Heart right ventricle (tissue), 16 donors: ENCODE measurements at regions of chr14 and their contacts with region 1.

Region 1: DNA sequence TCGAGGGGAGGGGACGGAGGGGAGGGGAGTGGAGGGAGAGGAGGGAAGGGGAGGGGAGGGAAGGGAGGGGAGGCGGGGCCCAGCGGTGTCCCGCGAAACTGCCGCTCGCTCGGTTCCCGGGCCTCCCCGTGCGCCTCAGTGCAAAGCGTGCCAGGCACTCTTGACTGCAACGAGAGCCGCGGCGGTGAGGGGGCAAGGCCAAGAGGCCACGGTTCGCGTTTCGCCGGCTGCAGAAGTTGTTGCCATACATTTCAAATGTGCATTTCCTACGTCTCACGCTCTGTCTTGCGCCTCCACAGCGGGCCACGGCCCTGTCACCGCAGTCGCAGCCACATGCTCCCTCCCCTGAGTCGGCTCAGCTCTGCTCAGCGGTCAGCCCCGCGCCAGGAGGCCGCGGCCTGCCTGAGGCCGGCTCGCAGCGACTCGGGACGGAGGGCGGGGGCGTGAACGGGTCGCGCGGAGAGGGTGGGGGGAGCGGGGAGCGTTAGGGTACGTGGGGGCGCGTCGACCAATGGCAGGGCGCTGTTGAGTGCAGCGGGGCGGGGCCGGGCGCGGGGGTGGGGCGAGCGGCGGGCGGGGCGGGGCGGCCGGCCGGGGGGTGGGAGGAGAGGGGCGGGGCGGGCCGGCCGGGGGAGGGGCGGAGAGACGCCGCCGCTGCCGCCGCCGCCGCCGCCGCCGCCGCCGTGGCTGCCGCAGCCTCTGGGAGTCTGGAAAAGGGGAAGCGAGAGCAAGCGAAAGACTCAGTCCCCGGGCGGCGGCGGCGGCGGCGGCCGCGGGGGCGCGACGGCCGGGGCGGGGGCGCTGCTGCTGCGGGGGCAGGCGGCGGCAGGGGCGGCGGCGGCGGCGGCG is at the start of gene PPP2R5C:
- DNase-seq: peak; percentile 94
- ATAC-seq: peak; percentile 86 to 94 (median 90)
- H3K4me3 ChIP-seq: peak within 1 kb of the TSS; percentile 89 to 100 (median 98)
- H3K27ac ChIP-seq: peak within 1 kb of the TSS; percentile 72 to 98 (median 95)
- H3K4me1 ChIP-seq: peaks cover 0 to 25% (median 11%) of the 10 kb centered on the region in 9 donors
- H3K27me3 ChIP-seq: no peaks in the 10 kb centered on the region
- CTCF ChIP-seq: no peak
- total RNA-seq, gene PPP2R5C: 183 to 257 (median 224) TPM

Region 2: DNA sequence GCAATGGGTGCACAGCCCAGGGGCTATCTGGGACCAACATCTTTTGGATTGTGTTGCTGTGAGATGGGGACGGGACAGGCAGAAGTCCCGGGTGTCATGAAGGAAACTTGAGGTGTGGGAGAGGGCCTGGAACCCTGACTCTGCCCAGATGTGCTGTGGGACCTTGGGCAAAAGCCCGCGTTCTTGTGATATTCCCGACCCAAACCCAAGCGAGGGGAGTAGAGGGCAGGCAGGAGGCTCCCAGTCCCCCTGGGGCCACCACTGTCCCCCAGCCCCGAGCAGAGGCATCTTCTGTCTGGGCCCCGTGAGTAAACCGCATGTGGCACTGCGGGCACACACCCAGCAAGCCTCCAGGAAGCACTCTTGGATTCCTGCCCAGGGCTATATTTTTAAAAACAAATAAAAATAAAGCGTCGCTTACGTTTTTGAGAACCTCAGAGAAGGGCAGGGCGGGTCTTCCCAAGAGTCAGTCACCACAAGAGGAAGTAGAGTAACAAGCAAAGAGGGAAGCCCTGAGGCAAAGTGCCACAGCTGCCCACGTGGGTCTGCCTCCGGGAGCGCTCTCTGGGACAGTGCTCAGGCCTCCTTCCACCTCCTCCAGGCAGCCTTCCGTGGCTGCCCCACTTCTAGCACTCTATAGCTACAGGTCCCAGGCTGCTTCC is 1213.5 kb before region 1 on chr14:
- intact Hi-C with region 1: loop called in 1 of 10 experiments (anchors 10 kb)
- DNase-seq: peak; percentile 38 to 54
- ATAC-seq: peak in 7 of 8 donors; percentile 45 to 84 (median 63)
- H3K4me3 ChIP-seq: peak overlapping the region in 1 of 10 donors; percentile 18
- H3K27ac ChIP-seq: peak overlapping the region in 2 of 10 donors; percentile 21 to 60
- H3K4me1 ChIP-seq: peaks cover 0 to 24% (median 0%) of the 10 kb centered on the region in 9 donors
- H3K27me3 ChIP-seq: peaks cover 0 to 3% (median 0%) of the 10 kb centered on the region in 7 donors
- CTCF ChIP-seq: no peak

Region 3: GRCh38 chr14:101707068-101707842 is 54.0 kb before region 1 on chr14:
- intact Hi-C with region 1: loop called in 6 of 10 experiments (anchors 5 kb)
- DNase-seq: peak in 1 of 2 donors; percentile 79
- ATAC-seq: peak; percentile 38 to 83 (median 64)
- H3K4me3 ChIP-seq: peak overlapping the region in 2 of 10 donors; percentile 1 to 25
- H3K27ac ChIP-seq: peak overlapping the region in 9 of 10 donors; percentile 71 to 90 (median 84)
- H3K4me1 ChIP-seq: peaks cover 10 to 33% (median 25%) of the 10 kb centered on the region in 9 donors
- H3K27me3 ChIP-seq: peaks cover 0 to 29% (median 5%) of the 10 kb centered on the region in 7 donors
- CTCF ChIP-seq: peak; percentile 72 to 90 (median 84)

Region 4: GRCh38 chr14:101809671-101810514 is 48.6 kb after region 1 on chr14:
- intact Hi-C with region 1: loop called in 1 of 10 experiments (anchors 5 kb)
- DNase-seq: peak; percentile 71 to 92
- ATAC-seq: peak; percentile 93 to 97 (median 94)
- H3K4me3 ChIP-seq: peak overlapping the region; percentile 46 to 81 (median 62)
- H3K27ac ChIP-seq: peak overlapping the region; percentile 88 to 100 (median 95)
- H3K4me1 ChIP-seq: peaks cover 15 to 62% (median 56%) of the 10 kb centered on the region in 9 donors
- H3K27me3 ChIP-seq: no peaks in the 10 kb centered on the region
- CTCF ChIP-seq: no peak

Region 5: DNA sequence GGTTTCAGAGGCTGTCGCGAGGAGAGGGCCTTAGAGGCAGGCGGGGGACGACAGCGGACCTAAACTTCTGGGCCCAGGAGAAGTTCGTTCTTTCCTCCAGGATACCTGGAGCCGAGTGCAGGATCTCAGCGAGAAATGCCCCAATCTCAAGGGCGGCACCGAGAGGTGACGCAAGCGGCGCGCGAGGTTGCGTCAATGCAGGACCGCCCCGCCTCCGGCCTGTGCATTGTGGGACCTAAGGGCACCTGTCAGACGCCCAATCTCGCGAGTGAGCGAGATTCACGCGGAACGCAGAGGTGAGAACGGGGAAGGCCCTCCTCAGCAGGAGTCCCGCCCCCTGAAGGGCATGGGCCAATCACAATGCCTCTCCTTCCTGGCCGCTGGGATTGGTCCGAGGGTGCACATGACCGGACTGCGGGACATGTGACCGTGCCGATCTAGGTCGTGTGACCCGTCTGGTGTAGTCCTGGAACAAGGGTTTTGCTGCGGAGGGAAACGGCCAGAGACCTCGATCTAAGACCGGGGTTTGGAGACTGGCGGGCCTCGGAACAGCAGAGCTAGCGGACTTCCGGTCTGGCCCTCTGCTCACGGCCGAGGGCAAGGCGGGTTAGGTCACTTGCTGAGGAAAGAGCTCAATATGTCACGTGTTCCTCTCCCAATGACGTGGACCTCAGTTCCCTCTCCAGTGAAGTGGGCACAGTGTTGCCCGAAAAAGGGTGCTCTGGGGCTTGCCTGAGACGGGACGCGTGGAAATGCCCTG is 186.8 kb after region 1 on chr14:
- intact Hi-C with region 1: loop called in 5 of 10 experiments (anchors 2 to 10 kb)
- DNase-seq: peak; percentile 100
- ATAC-seq: peak; percentile 98 to 99 (median 99)
- H3K4me3 ChIP-seq: peak overlapping the region; percentile 57 to 98 (median 78)
- H3K27ac ChIP-seq: peak overlapping the region; percentile 84 to 100 (median 96)
- H3K4me1 ChIP-seq: peaks cover 3 to 29% (median 20%) of the 10 kb centered on the region in 9 donors
- H3K27me3 ChIP-seq: peaks cover 0 to 25% (median 0%) of the 10 kb centered on the region in 7 donors
- CTCF ChIP-seq: no peak

Region 6: GRCh38 chr14:101953151-101953550 is 191.9 kb after region 1 on chr14:
- intact Hi-C with region 1: loop called in 5 of 10 experiments (anchors 2 to 10 kb)
- DNase-seq: no peak
- ATAC-seq: no peak
- H3K4me3 ChIP-seq: no peak overlapping the region
- H3K27ac ChIP-seq: no peak overlapping the region
- H3K4me1 ChIP-seq: peaks cover 3 to 23% (median 17%) of the 10 kb centered on the region in 9 donors
- H3K27me3 ChIP-seq: no peaks in the 10 kb centered on the region
- CTCF ChIP-seq: no peak

Region 7: GRCh38 chr14:101964297-101965144 is 203.3 kb after region 1 on chr14 and contains the start of gene DYNC1H1:
- intact Hi-C with region 1: loop called in 2 of 10 experiments (anchors 5 to 10 kb)
- DNase-seq: peak; percentile 93 to 97
- ATAC-seq: peak; percentile 90 to 96 (median 92)
- H3K4me3 ChIP-seq: peak within 1 kb of the TSS; percentile 83 to 100 (median 99)
- H3K27ac ChIP-seq: peak within 1 kb of the TSS; percentile 91 to 98 (median 97)
- H3K4me1 ChIP-seq: peaks cover 6 to 71% (median 54%) of the 10 kb centered on the region in 9 donors
- H3K27me3 ChIP-seq: no peaks in the 10 kb centered on the region
- CTCF ChIP-seq: no peak
- total RNA-seq, gene DYNC1H1: 413 to 777 (median 634) TPM